SK-N-SH (cell line): ENCODE measurements at regions of chr10 and their contacts with region 1.

Region 1: GRCh38 chr10:110600487-110601101 is 33.1 kb downstream of the SMC3 start:
- DNase-seq: peak; percentile 49
- H3K4me3 ChIP-seq: no peak overlapping the region; a peak in 1 of 4 replicates
- H3K27ac ChIP-seq: no peak overlapping the region
- H3K4me1 ChIP-seq: no peaks in the 10 kb centered on the region
- H3K27me3 ChIP-seq: no peaks in the 10 kb centered on the region
- CTCF ChIP-seq: peak; percentile 77
- EP300 ChIP-seq: no peak
- RAD21 ChIP-seq: peak; percentile 58

Region 2: GRCh38 chr10:110304780-110305421 is 295.7 kb before region 1 on chr10 and contains the start of gene SMNDC1:
- CTCF ChIA-PET with region 1: interaction called, 25 read pairs
- POLR2A ChIA-PET with region 1: no interaction called
- DNase-seq: peak; percentile 95
- H3K4me3 ChIP-seq: peak within 1 kb of the TSS; percentile 86 to 94
- H3K27ac ChIP-seq: peak within 1 kb of the TSS; percentile 93 to 95
- H3K4me1 ChIP-seq: peaks cover 13 to 18% of the 10 kb centered on the region in 2 experiments; a peak in 3 of 4 replicates
- H3K27me3 ChIP-seq: no peaks in the 10 kb centered on the region
- CTCF ChIP-seq: no peak
- EP300 ChIP-seq: no peak
- RAD21 ChIP-seq: no peak
- polyA plus RNA-seq, gene SMNDC1: 13.3 and 14.2 TPM in 2 replicates

Region 3: DNA sequence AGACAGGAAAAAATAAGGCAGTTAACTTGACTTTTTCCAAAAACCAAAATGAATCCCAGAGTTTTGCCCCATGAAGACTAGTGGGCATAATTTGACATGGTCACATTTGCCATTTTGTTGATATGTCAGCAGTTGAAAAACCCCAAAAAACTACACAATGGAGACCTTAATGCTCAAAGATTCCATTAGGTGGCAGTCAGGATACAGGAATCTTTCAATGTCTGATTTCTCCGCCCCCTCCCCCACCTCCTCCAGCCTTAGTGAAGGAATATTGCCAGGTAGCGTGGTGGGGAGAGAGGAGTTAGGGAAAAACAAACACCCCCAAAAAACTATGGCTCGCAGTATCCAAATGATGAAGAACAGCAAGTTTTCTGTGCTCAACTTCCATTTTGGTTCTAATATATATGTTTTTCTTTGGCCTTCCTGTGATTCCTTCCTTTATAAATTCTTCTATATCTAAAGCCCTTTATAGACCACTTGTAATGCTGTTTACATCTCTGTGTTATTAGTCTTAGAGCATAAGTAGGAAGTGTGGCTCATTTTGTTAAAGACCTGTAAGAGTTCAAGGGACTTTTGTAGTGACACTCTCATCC is 289.1 kb before region 1 on chr10:
- CTCF ChIA-PET with region 1: interaction called, 25 read pairs
- POLR2A ChIA-PET with region 1: no interaction called
- DNase-seq: peak; percentile 64
- H3K4me3 ChIP-seq: no peak overlapping the region; a peak in 1 of 4 replicates
- H3K27ac ChIP-seq: no peak overlapping the region
- H3K4me1 ChIP-seq: peaks cover 0 to 10% of the 10 kb centered on the region in 2 experiments; a peak in 3 of 4 replicates
- H3K27me3 ChIP-seq: no peaks in the 10 kb centered on the region
- CTCF ChIP-seq: peak; percentile 77
- EP300 ChIP-seq: no peak
- RAD21 ChIP-seq: peak; percentile 92

Region 4: DNA sequence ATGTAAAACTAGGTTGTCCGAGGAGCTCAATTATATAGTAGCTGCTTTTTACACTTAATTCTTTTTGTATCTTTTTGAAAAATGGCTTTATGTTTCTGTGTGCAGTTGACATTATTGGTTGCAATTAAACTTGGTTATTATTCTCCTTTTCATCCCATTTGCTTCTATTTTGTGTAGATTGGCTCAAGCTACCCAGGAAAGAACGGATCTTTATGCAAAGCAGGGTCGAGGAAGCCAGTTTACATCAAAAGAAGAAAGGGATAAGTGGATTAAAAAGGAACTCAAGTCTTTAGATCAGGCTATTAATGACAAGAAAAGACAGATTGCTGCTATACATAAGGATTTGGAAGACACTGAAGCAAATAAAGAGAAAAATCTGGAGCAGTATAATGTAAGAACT is 16.6 kb before region 1 on chr10:
- CTCF ChIA-PET with region 1: interaction called, 23 read pairs
- POLR2A ChIA-PET with region 1: no interaction called
- DNase-seq: no peak
- H3K4me3 ChIP-seq: no peak overlapping the region
- H3K27ac ChIP-seq: no peak overlapping the region
- H3K4me1 ChIP-seq: no peaks in the 10 kb centered on the region
- H3K27me3 ChIP-seq: no peaks in the 10 kb centered on the region
- CTCF ChIP-seq: no peak
- EP300 ChIP-seq: no peak
- RAD21 ChIP-seq: no peak